ENCODE measurements at regions of chr3 and their contacts with region 1.

Region 1: GRCh38 chr3:53269888-53270880 is 14.4 kb upstream of the TKT start:
- DNase-seq: peak; percentile 98 to 99
- H3K4me3 ChIP-seq: peak overlapping the region; percentile 42; the same call in 1 of the 2 replicates
- H3K27ac ChIP-seq: peak overlapping the region; percentile 97
- H3K4me1 ChIP-seq: peaks cover 71% of the 10 kb centered on the region
- H3K27me3 ChIP-seq: no peaks in the 10 kb centered on the region
- CTCF ChIP-seq: no peak

Region 2: GRCh38 chr3:53160660-53161449 is 109.3 kb before region 1 on chr3 and contains the start of gene PRKCD:
- CTCF ChIA-PET with region 1: no interaction called
- POLR2A ChIA-PET with region 1: no interaction called
- intact Hi-C with region 1: loop called (anchors 2 kb)
- DNase-seq: peak; percentile 60 to 84
- H3K4me3 ChIP-seq: peak within 1 kb of the TSS; percentile 84
- H3K27ac ChIP-seq: no peak within 1 kb of the TSS
- H3K4me1 ChIP-seq: peaks cover 57% of the 10 kb centered on the region
- H3K27me3 ChIP-seq: no peaks in the 10 kb centered on the region
- CTCF ChIP-seq: 0 out of 2 replicates have a peak, but pooled peaks have one; percentile 13
- total RNA-seq, gene PRKCD: 30.1 and 34.3 TPM in 2 replicates

Region 3: DNA sequence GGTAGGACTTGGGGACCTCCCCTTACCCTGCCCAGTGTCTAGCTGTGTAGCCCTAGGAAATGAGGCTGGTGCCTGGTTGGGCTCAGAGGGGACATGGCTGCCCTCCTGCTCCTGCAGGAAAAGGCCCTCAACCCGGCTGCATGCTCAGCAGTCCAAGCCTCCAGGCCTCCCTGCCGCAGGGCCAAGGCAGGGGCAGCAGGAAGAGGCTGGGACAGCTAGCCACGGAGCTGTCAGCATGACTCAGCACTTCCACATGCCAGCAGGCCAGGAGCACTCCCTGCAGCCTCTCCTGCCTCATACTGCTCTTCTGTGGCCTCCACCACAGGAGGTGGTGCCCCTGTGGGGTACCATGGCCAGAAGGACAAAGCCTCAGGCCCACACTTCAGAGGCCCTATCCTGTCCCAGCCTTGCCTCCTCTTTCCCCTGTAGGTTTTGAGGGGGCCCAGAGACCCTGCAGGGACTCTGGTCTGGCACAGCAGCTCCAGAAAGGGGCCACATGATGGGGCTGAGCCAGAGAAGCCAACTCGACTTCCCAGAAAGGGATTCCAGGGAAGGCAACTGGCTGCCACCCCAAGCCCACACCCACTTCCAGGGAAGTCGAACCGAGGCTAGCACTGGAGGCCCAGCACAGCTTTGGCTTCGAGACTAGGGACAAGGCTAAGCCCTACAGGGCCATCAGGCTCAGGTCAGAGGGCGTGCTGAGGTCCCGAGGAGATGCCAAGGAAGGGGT is 33.9 kb before region 1 on chr3:
- CTCF ChIA-PET with region 1: interaction called, 5 read pairs
- POLR2A ChIA-PET with region 1: interaction called, 5 read pairs
- intact Hi-C with region 1: loop called (anchors 1 kb)
- DNase-seq: peak; percentile 72 to 75
- H3K4me3 ChIP-seq: no peak overlapping the region
- H3K27ac ChIP-seq: peak overlapping the region; percentile 95
- H3K4me1 ChIP-seq: peaks cover 60% of the 10 kb centered on the region
- H3K27me3 ChIP-seq: no peaks in the 10 kb centered on the region
- CTCF ChIP-seq: no peak

Region 4: GRCh38 chr3:53295410-53295809 is 25.2 kb after region 1 on chr3:
- CTCF ChIA-PET with region 1: no interaction called
- POLR2A ChIA-PET with region 1: interaction called, 11 read pairs
- intact Hi-C with region 1: no loop called
- DNase-seq: no peak
- H3K4me3 ChIP-seq: no peak overlapping the region
- H3K27ac ChIP-seq: no peak overlapping the region
- H3K4me1 ChIP-seq: no peaks in the 10 kb centered on the region
- H3K27me3 ChIP-seq: no peaks in the 10 kb centered on the region
- CTCF ChIP-seq: no peak